Dorsolateral prefrontal cortex (tissue), 120 donors: ENCODE measurements at regions of chr6 and their contacts with region 1.

Region 1: GRCh38 chr6:119147101-119148053 is 68.9 kb upstream of the FAM184A start:
- DNase-seq: peak in 2 of 10 donors; percentile 41 to 43
- H3K4me3 ChIP-seq: peak overlapping the region in 6 of 59 donors; percentile 19 to 55 (median 45)
- H3K27ac ChIP-seq: peak overlapping the region in 22 of 59 donors; percentile 2 to 82 (median 34)
- H3K27me3 ChIP-seq: no peaks in the 10 kb centered on the region
- CTCF ChIP-seq: no peak

Region 2: DNA sequence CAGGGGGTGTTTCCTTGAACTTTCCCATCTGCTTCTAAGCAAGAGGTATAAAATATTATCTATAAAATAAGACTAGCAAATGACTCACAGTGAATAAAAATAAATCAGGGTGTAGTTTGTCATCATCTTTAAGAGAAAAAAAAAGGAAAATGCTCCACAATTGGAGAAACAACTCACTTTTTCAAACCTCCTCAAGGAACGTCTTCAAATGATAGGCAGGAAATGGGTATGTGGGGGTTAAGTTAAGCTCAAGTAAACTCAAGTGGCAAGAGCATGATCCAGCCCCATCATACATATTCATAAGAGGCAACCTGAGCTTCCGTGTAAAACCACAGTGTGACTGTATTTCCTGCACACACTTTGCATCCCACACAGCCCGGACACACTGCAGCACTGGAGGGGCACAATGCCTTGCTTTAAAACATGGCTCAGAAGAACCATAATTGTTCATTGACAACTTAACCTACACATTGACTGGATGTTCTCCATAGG is 437.5 kb before region 1 on chr6:
- intact Hi-C with region 1: no loop called
- DNase-seq: no peak
- H3K4me3 ChIP-seq: peak overlapping the region in 42 of 59 donors; percentile 10 to 64 (median 49)
- H3K27ac ChIP-seq: peak overlapping the region in 47 of 59 donors; percentile 2 to 81 (median 57)
- H3K27me3 ChIP-seq: no peaks in the 10 kb centered on the region
- CTCF ChIP-seq: no peak

Region 3: GRCh38 chr6:119349323-119350042 is 202.1 kb after region 1 on chr6 and contains the start of gene MAN1A1:
- intact Hi-C with region 1: loop called (anchors 5 kb)
- DNase-seq: peak; percentile 45 to 91 (median 74)
- H3K4me3 ChIP-seq: peak within 1 kb of the TSS; percentile 60 to 96 (median 85)
- H3K27ac ChIP-seq: peak within 1 kb of the TSS in 58 of 59 donors; percentile 17 to 95 (median 86)
- H3K27me3 ChIP-seq: peaks cover 0 to 58% (median 0%) of the 10 kb centered on the region in 45 donors
- CTCF ChIP-seq: peak in 4 of 56 donors; percentile 3 to 28 (median 8)
- total RNA-seq, gene MAN1A1: 5.8 to 40.2 (median 14.5) TPM